ENCODE measurements at regions of chr20 and their contacts with region 1.

Region 1: GRCh38 chr20:33791959-33792597 is 19.1 kb upstream of the CHMP4B start:
- DNase-seq: peak; percentile 82
- H3K4me3 ChIP-seq: no peak overlapping the region
- H3K27ac ChIP-seq: peak overlapping the region in 3 of 4 donors; percentile 88 to 89 (median 88)
- H3K4me1 ChIP-seq: peaks cover 0 to 63% (median 62%) of the 10 kb centered on the region in 4 donors
- H3K27me3 ChIP-seq: no peaks in the 10 kb centered on the region
- CTCF ChIP-seq: peak; percentile 57 to 81 (median 76)
- EP300 ChIP-seq: no peak
- POLR2A ChIP-seq: no peak

Region 2: DNA sequence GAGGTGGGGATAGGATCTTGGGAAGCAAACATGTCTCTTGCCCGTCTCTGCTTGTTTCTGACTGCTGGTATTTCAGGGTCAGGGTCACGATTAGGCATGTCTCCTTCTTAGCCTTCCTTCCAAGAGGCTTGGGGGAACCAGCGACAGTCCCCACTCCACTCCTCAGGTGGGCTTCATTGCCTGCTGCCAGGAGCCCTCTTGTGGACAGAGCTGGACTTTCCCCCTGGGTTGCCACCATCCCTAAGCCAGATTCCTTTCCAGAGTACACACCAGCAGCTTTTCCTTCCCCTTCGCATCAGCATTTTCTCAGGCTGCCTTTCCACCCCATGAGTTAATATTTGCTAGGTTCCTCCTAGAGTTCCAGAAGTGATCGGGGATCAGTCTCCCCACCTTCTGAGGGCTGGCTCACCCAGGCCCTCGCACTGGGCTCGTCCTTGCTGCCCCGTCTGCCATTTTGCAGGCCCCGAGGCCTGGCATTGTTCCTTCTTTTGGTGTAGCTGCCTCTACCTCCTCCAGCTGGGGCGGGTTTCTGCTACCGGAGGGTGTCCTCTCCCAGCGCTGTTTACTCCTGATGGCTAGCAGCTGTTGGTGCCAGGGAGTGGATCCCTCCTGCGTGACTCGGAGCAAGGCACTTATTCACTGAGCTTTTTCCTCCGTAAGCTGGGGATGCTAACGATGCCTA is 138.7 kb before region 1 on chr20:
- intact Hi-C with region 1: no loop called
- DNase-seq: peak; percentile 85
- H3K4me3 ChIP-seq: peak overlapping the region in 3 of 4 donors; percentile 13 to 32 (median 21)
- H3K27ac ChIP-seq: peak overlapping the region in 2 of 4 donors; percentile 30 to 49
- H3K4me1 ChIP-seq: peaks cover 0 to 28% (median 19%) of the 10 kb centered on the region in 4 donors
- H3K27me3 ChIP-seq: no peaks in the 10 kb centered on the region
- CTCF ChIP-seq: peak; percentile 79 to 90 (median 84)
- EP300 ChIP-seq: no peak
- POLR2A ChIP-seq: no peak

Region 3: GRCh38 chr20:33971147-33971975 is 179.3 kb after region 1 on chr20:
- intact Hi-C with region 1: loop called (anchors 2 kb)
- DNase-seq: peak; percentile 91
- H3K4me3 ChIP-seq: no peak overlapping the region
- H3K27ac ChIP-seq: peak overlapping the region; percentile 31 to 79 (median 64)
- H3K4me1 ChIP-seq: peaks cover 0 to 16% (median 8%) of the 10 kb centered on the region in 4 donors
- H3K27me3 ChIP-seq: no peaks in the 10 kb centered on the region
- CTCF ChIP-seq: no peak
- EP300 ChIP-seq: peak; percentile 26 to 93 (median 80)
- POLR2A ChIP-seq: no peak